ENCODE measurements at regions of chr12 and their contacts with region 1.

Region 1: DNA sequence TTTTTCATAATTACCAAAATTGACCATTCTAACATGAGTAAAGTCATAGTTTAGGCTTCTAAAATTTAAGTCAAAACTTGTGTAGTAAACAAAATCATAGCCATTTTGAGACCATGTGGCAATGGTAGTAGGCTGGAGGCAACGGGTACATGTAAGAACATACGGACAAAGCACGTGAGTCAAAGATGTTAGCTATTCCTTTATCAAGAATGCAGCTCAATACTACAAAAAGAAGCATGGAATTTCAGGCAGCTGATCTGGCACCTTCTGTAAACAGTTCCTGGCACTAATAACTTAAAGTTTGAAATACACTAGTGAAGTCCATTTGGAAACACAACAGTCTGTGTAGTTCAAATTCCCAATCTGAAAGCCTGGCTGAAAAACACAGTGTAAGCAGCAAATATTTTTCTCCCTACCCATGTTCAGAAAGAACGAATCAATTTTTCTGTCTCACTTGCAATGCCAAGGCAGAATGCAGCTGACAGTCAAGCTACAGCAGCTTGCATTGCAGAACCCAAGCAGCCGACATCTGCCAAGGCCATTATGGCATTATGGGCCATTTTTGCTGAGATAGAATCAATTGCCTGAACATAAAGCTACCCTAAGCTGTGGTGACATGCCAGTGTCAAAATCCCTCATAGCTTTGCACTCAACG is 29.3 kb downstream of the MYF5 start:
- DNase-seq: no peak
- H3K4me3 Mint-ChIP-seq: no peak overlapping the region
- H3K27ac Mint-ChIP-seq: no peak overlapping the region
- H3K4me1 Mint-ChIP-seq: no peaks in the 10 kb centered on the region
- H3K27me3 Mint-ChIP-seq: no peaks in the 10 kb centered on the region

Region 2: DNA sequence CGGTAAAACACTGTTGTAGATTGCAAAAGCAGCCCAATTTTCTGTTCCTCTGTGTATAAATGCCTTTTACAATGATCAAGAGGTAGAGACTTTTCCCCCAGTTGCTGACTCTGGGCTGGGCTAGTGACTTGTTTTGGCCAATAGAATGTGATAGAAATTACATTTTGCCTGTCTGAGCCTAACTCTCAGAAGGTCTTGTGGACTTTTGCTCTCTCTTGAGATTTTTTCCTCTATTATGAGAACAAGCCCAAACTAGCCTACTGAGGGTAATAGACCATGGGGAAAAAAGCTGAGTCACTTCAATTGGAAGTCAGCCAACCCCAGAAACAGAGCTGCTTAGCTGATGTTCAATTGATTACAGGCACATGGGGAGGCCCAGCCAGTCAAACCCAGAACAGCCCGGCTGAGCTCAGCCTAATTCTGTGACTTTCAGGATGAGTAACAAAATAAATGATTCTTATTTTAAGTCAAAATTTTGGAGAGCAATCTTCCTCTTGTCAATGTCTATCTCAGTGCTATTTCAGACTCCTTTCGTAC is 32.1 kb after region 1 on chr12:
- intact Hi-C with region 1: no loop called
- DNase-seq: peak; percentile 19
- H3K4me3 Mint-ChIP-seq: no peak overlapping the region
- H3K27ac Mint-ChIP-seq: peak overlapping the region; percentile 31
- H3K4me1 Mint-ChIP-seq: peaks cover 13% of the 10 kb centered on the region
- H3K27me3 Mint-ChIP-seq: no peaks in the 10 kb centered on the region

Region 3: DNA sequence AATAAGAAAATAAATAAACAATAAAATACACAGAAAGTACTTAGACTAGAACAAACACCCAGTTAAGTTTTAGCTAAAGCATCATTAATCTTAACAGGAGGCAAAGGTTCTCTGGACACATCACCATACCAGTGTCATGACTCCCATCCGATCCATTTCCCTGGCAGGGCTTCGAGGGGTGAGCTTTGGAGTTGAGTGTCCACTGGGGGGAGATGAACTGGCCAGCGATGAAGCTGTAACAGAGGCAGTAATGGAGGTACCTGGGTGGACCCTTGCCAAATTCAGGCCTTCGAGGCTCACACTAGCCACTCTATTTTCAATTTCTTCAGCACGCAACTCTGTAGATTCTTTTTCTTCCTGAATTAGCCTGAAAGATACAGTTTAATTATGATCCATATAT is 601.4 kb after region 1 on chr12:
- intact Hi-C with region 1: loop called (anchors 5 kb)
- DNase-seq: no peak
- H3K4me3 Mint-ChIP-seq: no peak overlapping the region
- H3K27ac Mint-ChIP-seq: no peak overlapping the region
- H3K4me1 Mint-ChIP-seq: no peaks in the 10 kb centered on the region
- H3K27me3 Mint-ChIP-seq: no peaks in the 10 kb centered on the region

Measured in activated T-helper 1 cell treated with anti-CD3 and anti-CD28 coated beads, Interleukin-12 subunit alpha, Interleukin-12 subunit beta, Interleukin-2, Interleukin-4 antibody, amounts not matched to agents 30 ng/mL and 10 ng/mL and 1 ng/mL, durations not matched to agents 14 hours and 24 hours and 36 hours (primary cell).